Right ventricle myocardium inferior (tissue), 1 donor: ENCODE measurements at regions of chr4 and their contacts with region 1.

Region 1: GRCh38 chr4:123893011-123893981 is 496.7 kb downstream of the SPRY1 start:
- DNase-seq: no peak
- ATAC-seq: peak; percentile 81

Region 2: GRCh38 chr4:123699880-123700771 is 193.2 kb before region 1 on chr4:
- intact Hi-C with region 1: no loop called
- DNase-seq: no peak
- ATAC-seq: peak; percentile 83

Region 3: GRCh38 chr4:123790681-123791080 is 102.6 kb before region 1 on chr4:
- intact Hi-C with region 1: loop called (anchors 10 kb)
- DNase-seq: no peak
- ATAC-seq: no peak

Region 4: GRCh38 chr4:123832173-123833026 is 60.9 kb before region 1 on chr4:
- intact Hi-C with region 1: loop called (anchors 2 kb)
- DNase-seq: peak; percentile 57
- ATAC-seq: peak; percentile 90

Region 5: DNA sequence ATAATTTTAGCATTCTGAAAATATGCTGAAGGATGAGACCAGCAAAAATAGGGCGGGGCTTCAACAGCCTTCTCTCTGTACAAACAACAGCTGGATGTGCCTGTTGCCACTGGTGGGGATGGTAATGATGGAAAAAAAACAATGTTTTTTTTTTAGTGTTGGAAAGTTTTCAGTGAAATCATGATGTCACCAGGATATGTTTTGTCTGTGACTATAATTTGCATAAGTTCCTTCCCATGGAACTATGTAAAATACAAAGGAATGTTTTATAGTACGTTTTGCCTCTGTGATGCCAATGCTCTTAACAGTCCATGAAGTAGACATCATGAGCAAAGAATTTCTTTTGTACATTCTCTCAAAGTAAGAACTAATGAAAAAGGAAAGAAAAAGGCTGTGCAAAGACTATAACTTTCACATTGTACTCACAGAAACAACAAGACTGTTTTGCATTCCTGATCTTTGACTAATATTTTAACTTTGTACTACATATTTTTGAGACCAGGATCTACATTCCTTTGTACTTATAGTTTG is 93.0 kb after region 1 on chr4:
- intact Hi-C with region 1: loop called (anchors 5 kb)
- DNase-seq: peak; percentile 63
- ATAC-seq: peak; percentile 89